PC-3 (cell line): ENCODE measurements at regions of chr12 and their contacts with region 1.

Region 1: GRCh38 chr12:115570069-115570777 is 707.3 kb downstream of the MED13L start:
- DNase-seq: peak; percentile 95
- ATAC-seq: peak; percentile 98
- H3K4me3 ChIP-seq: peak overlapping the region; percentile 53
- H3K27ac ChIP-seq: peak overlapping the region; percentile 85
- H3K4me1 ChIP-seq: peaks cover 10% of the 10 kb centered on the region
- H3K27me3 ChIP-seq: no peaks in the 10 kb centered on the region
- CTCF ChIP-seq: no peak

Region 2: DNA sequence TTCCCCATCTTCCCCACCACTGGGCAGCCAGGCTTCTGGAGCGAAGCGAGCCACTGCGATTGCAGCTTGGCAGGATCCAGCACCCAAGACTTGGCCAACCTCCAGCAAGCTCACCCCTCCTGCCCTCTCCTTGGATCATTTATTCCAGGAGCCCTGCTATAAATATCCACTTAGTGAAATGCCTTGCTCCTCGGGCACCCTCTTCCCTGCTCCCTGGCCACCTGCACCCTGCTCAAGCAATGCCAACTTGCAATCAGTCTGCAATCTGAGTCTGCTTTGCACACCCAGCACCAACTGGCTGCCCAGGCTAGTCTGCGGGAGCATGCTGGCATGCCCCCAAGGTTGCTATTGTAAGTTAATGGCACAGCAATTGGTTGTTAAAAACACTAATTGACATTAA is 41.3 kb after region 1 on chr12:
- CTCF ChIA-PET with region 1: interaction called, 17 read pairs
- POLR2A ChIA-PET with region 1: no interaction called
- intact Hi-C with region 1: no loop called
- DNase-seq: no peak
- ATAC-seq: no peak
- H3K4me3 ChIP-seq: no peak overlapping the region
- H3K27ac ChIP-seq: no peak overlapping the region
- H3K4me1 ChIP-seq: no peaks in the 10 kb centered on the region
- H3K27me3 ChIP-seq: peaks cover 46% of the 10 kb centered on the region
- CTCF ChIP-seq: no peak

Region 3: GRCh38 chr12:115683240-115683780 is 113.1 kb after region 1 on chr12:
- CTCF ChIA-PET with region 1: no interaction called
- POLR2A ChIA-PET with region 1: no interaction called
- intact Hi-C with region 1: no loop called
- DNase-seq: no peak
- ATAC-seq: no peak
- H3K4me3 ChIP-seq: no peak overlapping the region
- H3K27ac ChIP-seq: no peak overlapping the region
- H3K4me1 ChIP-seq: no peaks in the 10 kb centered on the region
- H3K27me3 ChIP-seq: peaks cover 27% of the 10 kb centered on the region
- CTCF ChIP-seq: no peak